ENCODE measurements at regions of chr9 and their contacts with region 1.

Region 1: DNA sequence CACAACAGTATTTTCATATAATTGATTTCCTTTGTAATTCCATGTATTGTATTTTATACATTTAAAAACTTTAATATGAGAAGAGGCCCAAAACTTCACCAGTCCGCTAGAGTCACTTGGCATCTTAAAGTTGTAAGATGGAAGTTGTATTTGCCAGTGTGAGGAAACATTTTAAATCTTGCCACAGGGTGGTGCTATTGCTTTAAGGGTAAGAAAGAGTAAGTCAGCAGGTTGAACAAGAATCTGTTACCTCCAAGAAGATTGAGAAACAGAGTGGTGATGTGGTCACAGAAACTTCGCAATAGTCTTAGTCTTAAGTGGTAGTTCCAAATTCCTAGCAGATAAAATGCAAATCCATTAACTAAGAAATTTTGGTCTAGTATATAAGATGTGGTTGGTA is 39.8 kb upstream of the RANBP6 start:
- DNase-seq: no peak
- H3K4me3 ChIP-seq: no peak overlapping the region
- H3K27ac ChIP-seq: no peak overlapping the region
- H3K4me1 ChIP-seq: no peaks in the 10 kb centered on the region
- H3K27me3 ChIP-seq: no peaks in the 10 kb centered on the region
- CTCF ChIP-seq: peak; percentile 20 to 46

Region 2: DNA sequence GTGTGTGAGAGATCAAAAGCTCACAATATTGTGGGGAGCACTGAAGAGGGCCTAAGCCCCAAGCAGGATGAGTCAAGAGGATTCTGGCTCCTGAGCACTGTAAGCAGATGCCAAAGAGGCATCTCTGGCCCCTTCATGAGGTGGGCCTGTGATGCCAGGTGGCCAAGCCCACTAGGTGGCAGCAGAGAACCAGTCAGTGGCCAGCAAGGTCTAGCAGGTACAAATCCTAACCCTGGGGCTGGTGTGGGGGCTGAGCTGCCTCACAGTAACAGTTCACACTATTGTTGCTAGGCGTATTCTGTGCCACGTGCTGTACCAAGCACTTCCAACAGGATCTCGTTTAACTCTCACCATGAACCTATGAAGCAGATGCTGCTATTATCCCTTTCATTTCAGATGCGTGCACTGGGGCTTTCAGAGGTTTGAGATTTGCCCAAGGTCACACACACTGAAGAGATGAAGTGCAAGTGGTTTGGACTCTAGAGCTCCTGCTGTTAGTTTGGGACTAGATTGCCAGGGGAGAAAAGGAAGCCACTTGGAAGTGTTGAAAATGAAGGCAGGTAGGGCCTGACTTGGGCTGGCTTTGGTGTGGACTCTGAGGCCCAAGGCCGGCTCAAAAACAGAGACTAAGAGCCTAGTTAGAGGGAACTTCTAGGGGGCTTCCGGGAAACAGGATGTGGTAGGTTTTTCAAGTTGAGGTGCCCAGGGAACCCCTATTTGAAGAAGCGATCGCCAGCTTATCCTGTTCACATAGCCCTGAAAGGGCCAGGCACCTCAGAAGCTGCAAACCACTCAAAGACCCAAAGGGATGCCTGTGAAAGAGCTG is 168.9 kb before region 1 on chr9:
- intact Hi-C with region 1: loop called (anchors 2 kb)
- DNase-seq: peak; percentile 59 to 76
- H3K4me3 ChIP-seq: no peak overlapping the region
- H3K27ac ChIP-seq: no peak overlapping the region
- H3K4me1 ChIP-seq: no peaks in the 10 kb centered on the region
- H3K27me3 ChIP-seq: no peaks in the 10 kb centered on the region
- CTCF ChIP-seq: peak; percentile 62 to 84

Region 3: GRCh38 chr9:6015278-6016157 is 39.7 kb before region 1 on chr9 and contains the start of gene RANBP6:
- intact Hi-C with region 1: no loop called
- DNase-seq: peak; percentile 81 to 92
- H3K4me3 ChIP-seq: peak within 1 kb of the TSS; percentile 58 to 71
- H3K27ac ChIP-seq: peak within 1 kb of the TSS; percentile 68 to 73
- H3K4me1 ChIP-seq: peaks cover 0 to 39% (median 18%) of the 10 kb centered on the region in 4 donors
- H3K27me3 ChIP-seq: no peaks in the 10 kb centered on the region
- CTCF ChIP-seq: no peak

Region 4: GRCh38 chr9:6305954-6306563 is 250.8 kb after region 1 on chr9:
- intact Hi-C with region 1: loop called (anchors 10 kb)
- DNase-seq: no peak
- H3K4me3 ChIP-seq: no peak overlapping the region
- H3K27ac ChIP-seq: no peak overlapping the region
- H3K4me1 ChIP-seq: no peaks in the 10 kb centered on the region
- H3K27me3 ChIP-seq: no peaks in the 10 kb centered on the region
- CTCF ChIP-seq: peak; percentile 54 to 69

Measured in tibial artery (tissue), 4 donors.